ENCODE measurements at regions of chr19 and their contacts with region 1.

Region 1: DNA sequence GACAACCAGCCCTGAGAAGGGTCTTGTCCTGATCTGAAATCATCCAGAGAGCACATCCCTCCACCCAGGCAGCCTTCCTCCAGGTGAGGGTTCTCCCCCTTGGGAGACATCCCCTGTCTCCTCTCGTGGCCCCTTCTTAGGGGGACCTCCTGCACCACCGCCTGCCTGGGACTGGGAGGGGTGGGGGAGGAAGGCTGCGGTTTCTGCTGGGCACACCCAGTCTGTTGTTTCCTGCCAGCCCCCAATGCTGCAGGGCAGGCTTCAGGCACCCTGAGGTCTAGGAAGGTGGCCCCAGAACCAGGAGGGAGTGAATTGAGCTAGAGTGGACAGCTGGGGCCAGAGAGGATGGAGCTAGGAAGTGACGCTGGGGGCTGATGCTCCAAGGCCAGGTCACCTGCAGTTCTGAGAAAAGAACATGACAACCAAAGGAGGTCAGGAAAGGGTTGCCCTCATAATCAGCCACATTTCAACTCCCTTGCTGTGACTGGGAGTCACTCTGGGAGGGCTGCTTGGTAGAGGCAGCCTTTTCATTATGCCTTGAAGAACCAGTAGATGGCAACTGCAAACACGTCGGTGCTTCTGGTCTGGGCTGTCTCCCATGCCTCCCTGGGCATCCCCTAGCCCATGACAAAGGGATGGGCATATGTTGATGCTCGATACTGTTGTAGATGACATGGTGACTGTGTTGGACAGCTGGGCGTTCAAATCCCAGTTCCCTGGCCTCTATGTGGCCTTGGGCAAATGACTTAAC is 1.4 kb downstream of the ARHGEF18 start:
- DNase-seq: peak in 1 of 6 donors; percentile 51
- ATAC-seq: no peak
- H3K4me3 ChIP-seq: no peak overlapping the region
- H3K27ac ChIP-seq: no peak overlapping the region
- H3K4me1 ChIP-seq: no peaks in the 10 kb centered on the region
- H3K27me3 ChIP-seq: no peaks in the 10 kb centered on the region
- CTCF ChIP-seq: no peak

Region 2: GRCh38 chr19:7242601-7243258 is 107.4 kb before region 1 on chr19:
- intact Hi-C with region 1: no loop called
- DNase-seq: no peak
- ATAC-seq: peak in 3 of 4 donors; percentile 4 to 60 (median 27)
- H3K4me3 ChIP-seq: no peak overlapping the region
- H3K27ac ChIP-seq: peak overlapping the region in 2 of 4 donors; percentile 3 to 58
- H3K4me1 ChIP-seq: peaks cover 0 to 10% (median 3%) of the 10 kb centered on the region in 3 donors
- H3K27me3 ChIP-seq: no peaks in the 10 kb centered on the region
- CTCF ChIP-seq: no peak

Region 3: DNA sequence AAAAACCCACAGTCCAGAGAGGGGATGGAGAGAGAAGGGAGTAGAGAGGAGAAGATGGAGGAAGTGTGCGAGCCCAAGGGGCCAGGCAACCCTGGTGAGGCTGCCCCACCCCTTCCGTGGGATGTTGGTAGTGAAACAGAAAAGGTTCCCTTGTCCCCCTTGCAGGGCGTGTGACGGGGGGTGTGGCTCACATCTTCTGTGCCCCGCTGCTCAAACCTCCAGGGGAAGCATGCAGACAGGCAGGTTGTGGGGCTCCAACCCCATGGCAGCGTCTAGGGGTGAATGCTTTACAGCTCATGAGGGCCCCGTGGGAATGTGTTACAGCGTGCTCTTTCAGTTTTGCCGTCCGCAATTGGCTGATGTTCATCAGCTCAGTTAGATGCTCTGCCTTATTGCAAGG is 465.2 kb after region 1 on chr19:
- intact Hi-C with region 1: loop called in 1 of 3 experiments (anchors 10 kb)
- DNase-seq: no peak
- ATAC-seq: no peak
- H3K4me3 ChIP-seq: no peak overlapping the region
- H3K27ac ChIP-seq: no peak overlapping the region
- H3K4me1 ChIP-seq: no peaks in the 10 kb centered on the region
- H3K27me3 ChIP-seq: no peaks in the 10 kb centered on the region
- CTCF ChIP-seq: no peak